GM10248 (cell line): ENCODE measurements at regions of chr2 and their contacts with region 1.

Region 1: GRCh38 chr2:85826990-85827878 is 61.6 kb downstream of the ST3GAL5 start:
- DNase-seq: peak; percentile 85
- CTCF ChIP-seq: peak; percentile 94

Region 2: GRCh38 chr2:85678794-85679672 is 148.2 kb before region 1 on chr2:
- CTCF ChIA-PET with region 1: no interaction called
- POLR2A ChIA-PET with region 1: no interaction called
- DNase-seq: peak; percentile 91
- CTCF ChIP-seq: peak; percentile 99

Region 3: DNA sequence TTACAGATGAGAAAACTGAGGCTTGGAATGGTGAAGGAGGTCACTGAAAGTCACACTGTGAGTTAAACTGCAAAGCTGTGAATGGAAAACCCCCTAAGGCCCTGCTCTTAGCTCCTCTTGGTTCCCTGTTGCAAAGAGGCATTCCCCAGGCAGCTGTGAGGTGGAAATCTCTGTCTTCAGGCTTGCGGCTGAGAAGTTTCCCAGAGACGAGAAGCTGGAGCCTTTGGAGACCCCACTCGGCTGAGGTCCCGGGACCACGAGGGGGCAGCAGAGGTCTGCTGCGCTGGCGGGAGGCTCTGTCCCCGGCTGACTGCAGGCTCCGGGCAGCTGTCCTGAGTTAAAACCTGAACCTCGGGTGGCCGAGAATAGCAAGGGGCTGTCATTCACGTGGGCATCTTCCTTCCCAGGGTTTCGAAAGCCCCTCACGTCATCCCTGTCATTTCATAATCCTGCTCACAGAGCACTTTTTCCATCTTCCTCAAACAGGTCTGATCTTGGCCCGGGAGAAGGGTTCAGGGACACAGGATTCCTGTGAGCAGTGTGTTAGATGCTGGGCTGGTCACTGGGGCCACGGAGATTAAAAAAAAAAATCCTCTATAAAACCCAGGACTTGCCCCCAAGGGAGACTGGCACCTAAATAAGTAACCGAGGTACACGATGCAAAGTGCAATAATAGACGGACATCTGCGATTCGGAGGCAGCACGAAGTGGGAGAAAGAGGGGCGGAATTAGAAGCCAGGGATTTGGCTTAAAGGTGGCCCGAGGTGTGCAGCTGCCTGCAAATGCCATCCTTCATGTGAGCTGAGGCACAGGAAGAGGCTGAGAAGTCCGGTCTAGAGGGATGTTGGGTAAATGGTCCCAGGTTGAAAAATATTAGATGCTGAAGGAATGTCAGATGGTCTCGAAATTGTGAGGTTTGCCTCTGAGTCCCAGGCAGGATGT is 98.1 kb before region 1 on chr2:
- CTCF ChIA-PET with region 1: interaction called, 20 read pairs
- POLR2A ChIA-PET with region 1: no interaction called
- DNase-seq: peak; percentile 89
- CTCF ChIP-seq: peak; percentile 96

Region 4: GRCh38 chr2:85843543-85843942 is 16.3 kb after region 1 on chr2:
- CTCF ChIA-PET with region 1: interaction called, 19 read pairs
- POLR2A ChIA-PET with region 1: no interaction called
- DNase-seq: no peak
- CTCF ChIP-seq: peak; percentile 16

Region 5: DNA sequence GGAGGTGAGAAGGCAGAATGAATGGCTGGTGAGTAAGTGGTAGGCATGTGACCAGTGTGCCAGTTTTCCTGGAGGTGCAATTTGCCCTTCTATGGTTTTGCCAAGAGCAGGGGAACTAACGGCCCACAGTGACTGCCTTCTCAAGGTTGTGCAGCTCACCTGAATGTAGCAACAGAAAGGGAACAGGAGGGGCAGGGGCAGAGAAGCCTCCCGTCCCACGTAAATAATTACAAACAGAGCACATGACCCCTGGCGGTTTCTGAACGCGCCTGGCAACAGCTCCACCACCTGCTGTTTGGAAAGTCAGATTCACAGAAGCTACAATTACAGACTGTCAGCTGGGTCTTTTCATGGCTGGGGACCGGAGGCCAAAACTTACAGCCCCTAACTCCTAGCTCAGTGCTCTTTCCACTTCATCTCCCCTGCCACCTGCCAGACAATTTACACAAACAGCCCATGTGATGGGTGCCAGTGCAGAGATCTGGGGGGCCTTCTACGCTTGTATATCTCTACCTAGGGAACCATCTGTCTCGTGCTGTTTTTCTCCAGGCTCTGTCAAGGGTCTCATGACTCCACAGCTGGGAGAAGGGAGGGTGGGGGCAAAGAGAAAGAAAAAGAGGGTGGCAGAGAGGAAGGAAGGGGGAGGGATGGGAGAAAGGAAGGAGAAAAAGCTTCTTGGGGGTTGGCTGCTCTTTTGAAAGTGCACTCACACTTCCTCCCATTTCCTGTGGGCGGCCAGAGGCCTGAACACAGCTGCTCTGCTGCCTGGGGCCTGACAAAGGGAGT is 208.8 kb after region 1 on chr2:
- CTCF ChIA-PET with region 1: interaction called, 26 read pairs
- POLR2A ChIA-PET with region 1: no interaction called
- DNase-seq: peak; percentile 87
- CTCF ChIP-seq: peak; percentile 51

Region 6: GRCh38 chr2:86079981-86080911 is 253.0 kb after region 1 on chr2:
- CTCF ChIA-PET with region 1: interaction called, 436 read pairs
- POLR2A ChIA-PET with region 1: no interaction called
- DNase-seq: peak; percentile 75
- CTCF ChIP-seq: peak; percentile 90

Region 7: DNA sequence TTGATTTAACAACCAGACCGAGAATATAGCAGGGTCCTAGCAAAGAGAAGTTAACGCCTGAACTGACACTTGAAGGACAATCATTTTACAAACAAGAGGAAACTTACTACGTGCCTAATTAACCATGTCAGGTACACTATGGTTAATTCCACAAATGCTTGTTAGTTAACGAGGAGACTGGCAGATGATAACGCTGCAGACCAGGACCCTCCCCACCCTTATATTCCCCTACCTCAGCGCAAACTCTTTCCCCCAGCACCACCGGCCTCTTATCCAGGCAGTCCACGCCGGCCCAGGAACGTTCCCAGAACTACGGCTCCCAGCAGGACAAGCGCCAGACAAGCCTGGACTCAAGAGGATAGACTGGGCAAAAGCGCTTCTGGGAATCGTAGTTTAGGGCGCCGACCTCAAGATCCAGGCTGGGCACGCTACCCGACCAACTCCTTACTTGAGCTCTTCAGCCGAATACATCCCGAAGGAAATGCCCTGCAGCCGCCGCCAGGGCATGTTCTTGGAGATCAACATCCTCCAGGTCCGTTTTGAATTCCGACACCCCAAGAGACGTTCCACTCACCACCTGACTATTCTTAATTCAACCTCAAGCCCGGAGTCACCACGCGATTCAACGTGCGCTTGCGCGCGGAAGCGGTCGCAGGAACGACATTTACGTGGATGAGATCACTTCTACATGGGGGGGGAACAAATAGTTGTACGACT is 278.2 kb after region 1 on chr2 and contains the start of gene POLR1A:
- CTCF ChIA-PET with region 1: interaction called, 10 read pairs
- POLR2A ChIA-PET with region 1: no interaction called
- DNase-seq: peak; percentile 75
- CTCF ChIP-seq: no peak